ENCODE measurements at regions of chr3 and their contacts with region 1.

Region 1: DNA sequence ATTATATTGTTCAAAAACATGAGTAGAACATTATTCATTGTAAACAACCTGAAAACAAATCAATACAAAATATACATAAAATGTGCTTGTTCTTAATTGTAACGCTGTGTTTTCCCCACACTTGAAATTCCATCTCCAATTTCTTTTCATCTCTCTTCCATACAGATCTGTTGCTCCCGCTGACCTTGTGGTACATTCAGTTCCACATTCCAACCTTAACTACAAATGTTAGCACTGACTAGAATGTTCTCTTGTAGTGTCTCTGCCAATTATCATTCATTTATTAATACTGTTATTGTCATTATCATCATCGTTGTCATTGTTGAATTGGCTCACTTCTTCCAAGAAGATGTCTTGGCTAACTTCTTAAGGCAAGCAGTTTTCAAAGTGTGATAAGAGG is 65.7 kb downstream of the NLGN1 start:
- DNase-seq: no peak
- ATAC-seq: no peak

Region 2: GRCh38 chr3:173429527-173429926 is 33.7 kb before region 1 on chr3:
- intact Hi-C with region 1: loop called (anchors 1 kb)
- DNase-seq: no peak
- ATAC-seq: no peak